HCT116 (cell line): ENCODE measurements at regions of chr4 and their contacts with region 1.

Region 1: GRCh38 chr4:40629401-40630334 is at the start of gene RBM47:
- DNase-seq: peak; percentile 50
- ATAC-seq: peak; percentile 86
- H3K4me3 ChIP-seq: peak within 1 kb of the TSS; percentile 62 to 72
- H3K27ac ChIP-seq: peak within 1 kb of the TSS; percentile 96
- H3K4me1 ChIP-seq: peaks cover 22 to 29% of the 10 kb centered on the region in 2 experiments
- H3K27me3 ChIP-seq: no peaks in the 10 kb centered on the region
- CTCF ChIP-seq: 0 out of 6 replicates have a peak, but pooled peaks of 1 of the 3 experiments have one; percentile 13
- POLR2A ChIP-seq: no peak
- RAD21 ChIP-seq: peak; percentile 24; the same call in 1 of the 2 replicates
- total RNA-seq, gene RBM47: 22.2 TPM

Region 2: DNA sequence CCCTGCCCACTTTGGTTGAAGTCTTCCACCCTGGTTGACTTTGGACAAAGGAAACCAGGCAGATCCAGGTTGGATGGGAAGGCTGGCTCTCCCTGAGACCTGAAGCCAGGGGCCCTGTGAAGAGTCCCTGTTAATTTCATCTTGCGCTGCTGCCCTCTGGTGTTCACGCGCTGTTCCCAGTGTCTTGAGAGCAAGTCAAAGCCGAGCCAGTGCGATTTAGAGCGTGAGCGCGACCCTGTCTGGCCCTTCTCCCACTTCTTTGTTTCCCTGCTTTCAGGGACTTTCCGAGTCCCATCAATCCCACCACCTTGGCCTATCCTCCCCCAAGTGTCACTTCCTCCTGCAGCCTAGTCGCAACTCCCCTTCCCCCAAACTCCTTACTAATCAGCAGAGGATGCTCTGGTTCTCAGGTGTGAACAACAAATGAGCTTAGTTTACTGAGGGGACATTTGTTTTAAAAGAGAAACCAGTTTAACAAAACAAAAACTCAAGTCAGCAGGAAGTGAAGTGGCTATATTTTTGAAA is 320.4 kb before region 1 on chr4:
- CTCF ChIA-PET with region 1: no interaction called
- POLR2A ChIA-PET with region 1: no interaction called
- RAD21 ChIA-PET with region 1: no interaction called
- intact Hi-C with region 1: no loop called
- DNase-seq: peak; percentile 77
- ATAC-seq: peak; percentile 99
- H3K4me3 ChIP-seq: peak overlapping the region; percentile 11 to 37; a peak in 2 of 4 replicates
- H3K27ac ChIP-seq: no peak overlapping the region
- H3K4me1 ChIP-seq: peaks cover 0 to 8% of the 10 kb centered on the region in 2 experiments; a peak in 2 of 4 replicates
- H3K27me3 ChIP-seq: no peaks in the 10 kb centered on the region
- CTCF ChIP-seq: peak; percentile 87 to 91 (median 88)
- POLR2A ChIP-seq: no peak
- RAD21 ChIP-seq: peak; percentile 92

Region 3: GRCh38 chr4:40564004-40564403 is 65.7 kb before region 1 on chr4:
- CTCF ChIA-PET with region 1: no interaction called
- POLR2A ChIA-PET with region 1: no interaction called
- RAD21 ChIA-PET with region 1: no interaction called
- intact Hi-C with region 1: loop called (anchors 5 kb)
- DNase-seq: peak; percentile 29
- ATAC-seq: peak; percentile 62
- H3K4me3 ChIP-seq: peak overlapping the region in 1 of 2 experiments; percentile 30; a peak in 1 of 4 replicates
- H3K27ac ChIP-seq: peak overlapping the region; percentile 49; the same call in 1 of the 2 replicates
- H3K4me1 ChIP-seq: peaks cover 51 to 64% of the 10 kb centered on the region in 2 experiments
- H3K27me3 ChIP-seq: no peaks in the 10 kb centered on the region
- CTCF ChIP-seq: no peak
- POLR2A ChIP-seq: no peak
- RAD21 ChIP-seq: no peak

Region 4: GRCh38 chr4:40613456-40613855 is 16.2 kb before region 1 on chr4:
- CTCF ChIA-PET with region 1: no interaction called
- POLR2A ChIA-PET with region 1: no interaction called
- RAD21 ChIA-PET with region 1: no interaction called
- intact Hi-C with region 1: no loop called
- DNase-seq: no peak
- ATAC-seq: no peak
- H3K4me3 ChIP-seq: no peak overlapping the region
- H3K27ac ChIP-seq: no peak overlapping the region
- H3K4me1 ChIP-seq: peaks cover 0 to 12% of the 10 kb centered on the region in 2 experiments; a peak in 1 of 4 replicates
- H3K27me3 ChIP-seq: no peaks in the 10 kb centered on the region
- CTCF ChIP-seq: no peak
- POLR2A ChIP-seq: no peak
- RAD21 ChIP-seq: no peak